ENCODE measurements at regions of chr2 and their contacts with region 1.

Region 1: GRCh38 chr2:219278655-219279516 is at the start of gene DNAJB2:
- DNase-seq: peak; percentile 99
- H3K4me3 ChIP-seq: peak within 1 kb of the TSS; percentile 83
- H3K27ac ChIP-seq: peak within 1 kb of the TSS; percentile 90
- H3K4me1 ChIP-seq: peaks cover 39% of the 10 kb centered on the region
- CTCF ChIP-seq: no peak
- total RNA-seq, gene DNAJB2: 49.9 and 53.0 TPM in 2 replicates

Region 2: GRCh38 chr2:218648088-218648786 is 630.6 kb before region 1 on chr2:
- CTCF ChIA-PET with region 1: no interaction called
- POLR2A ChIA-PET with region 1: no interaction called
- intact Hi-C with region 1: no loop called
- DNase-seq: peak; percentile 67
- H3K4me3 ChIP-seq: no peak overlapping the region
- H3K27ac ChIP-seq: no peak overlapping the region
- H3K4me1 ChIP-seq: no peaks in the 10 kb centered on the region
- CTCF ChIP-seq: peak; percentile 96

Region 3: GRCh38 chr2:218876562-218877219 is 402.2 kb before region 1 on chr2:
- CTCF ChIA-PET with region 1: no interaction called
- POLR2A ChIA-PET with region 1: no interaction called
- intact Hi-C with region 1: loop called (anchors 10 kb)
- DNase-seq: peak; percentile 73
- H3K4me3 ChIP-seq: no peak overlapping the region
- H3K27ac ChIP-seq: peak overlapping the region; percentile 21
- H3K4me1 ChIP-seq: peaks cover 52% of the 10 kb centered on the region
- CTCF ChIP-seq: peak; percentile 99

Region 4: GRCh38 chr2:219177552-219178376 is 101.1 kb before region 1 on chr2 and contains the start of gene RETREG2:
- CTCF ChIA-PET with region 1: no interaction called
- POLR2A ChIA-PET with region 1: interaction called, 3 read pairs
- intact Hi-C with region 1: loop called (anchors 1 kb)
- DNase-seq: peak; percentile 95
- H3K4me3 ChIP-seq: peak within 1 kb of the TSS; percentile 88
- H3K27ac ChIP-seq: peak within 1 kb of the TSS; percentile 92
- H3K4me1 ChIP-seq: peaks cover 18% of the 10 kb centered on the region
- CTCF ChIP-seq: peak; percentile 57
- total RNA-seq, gene RETREG2: 44.9 and 59.1 TPM in 2 replicates

Region 5: DNA sequence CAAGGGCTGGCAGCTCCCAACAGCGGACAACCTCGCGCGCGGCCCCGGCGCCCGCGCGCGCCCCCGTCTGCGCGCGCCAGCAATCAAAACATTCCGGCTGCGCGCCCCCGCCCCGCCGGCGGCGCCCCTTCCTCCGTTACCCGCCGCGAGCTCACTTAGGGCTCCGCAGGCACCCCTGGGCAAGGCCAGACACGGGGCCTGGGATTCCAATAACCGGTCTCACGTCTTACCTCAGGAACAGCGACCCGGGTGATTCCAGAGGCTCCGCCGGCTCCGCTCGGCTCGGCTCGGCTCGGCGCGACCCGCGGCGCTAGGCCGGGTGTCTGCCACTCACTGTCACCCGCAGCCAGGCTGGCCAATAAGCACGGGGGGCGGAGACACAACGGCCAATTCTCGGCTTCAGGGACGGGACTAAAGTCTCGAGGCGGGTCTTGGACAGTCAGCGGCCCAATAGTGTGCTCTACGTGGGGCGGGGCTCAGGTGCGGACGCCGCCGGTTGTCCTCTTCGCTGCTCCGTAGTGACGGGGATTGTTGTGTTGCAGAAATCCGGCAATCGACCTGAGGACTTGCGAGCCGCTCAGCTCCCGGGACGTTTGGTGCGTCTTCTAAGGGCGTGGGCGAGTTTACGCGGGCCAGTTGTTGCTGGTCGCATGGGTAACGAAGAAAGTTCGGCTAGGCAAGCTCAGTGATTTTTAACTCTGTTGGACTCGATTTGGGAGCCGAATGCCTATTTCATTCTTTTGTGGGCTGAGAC is 49.4 kb before region 1 on chr2 and contains the starts of genes ANKZF1 and ATG9A:
- CTCF ChIA-PET with region 1: interaction called, 3 read pairs
- POLR2A ChIA-PET with region 1: no interaction called
- intact Hi-C with region 1: loop called (anchors 1 kb)
- DNase-seq: peak; percentile 99
- H3K4me3 ChIP-seq: peak within 1 kb of the TSS; percentile 87
- H3K27ac ChIP-seq: peak within 1 kb of the TSS; percentile 76
- H3K4me1 ChIP-seq: peaks cover 16% of the 10 kb centered on the region
- CTCF ChIP-seq: no peak
- total RNA-seq, gene ANKZF1: 57.8 and 91.0 TPM in 2 replicates
- total RNA-seq, gene ATG9A: 22.2 and 27.7 TPM in 2 replicates

Region 6: DNA sequence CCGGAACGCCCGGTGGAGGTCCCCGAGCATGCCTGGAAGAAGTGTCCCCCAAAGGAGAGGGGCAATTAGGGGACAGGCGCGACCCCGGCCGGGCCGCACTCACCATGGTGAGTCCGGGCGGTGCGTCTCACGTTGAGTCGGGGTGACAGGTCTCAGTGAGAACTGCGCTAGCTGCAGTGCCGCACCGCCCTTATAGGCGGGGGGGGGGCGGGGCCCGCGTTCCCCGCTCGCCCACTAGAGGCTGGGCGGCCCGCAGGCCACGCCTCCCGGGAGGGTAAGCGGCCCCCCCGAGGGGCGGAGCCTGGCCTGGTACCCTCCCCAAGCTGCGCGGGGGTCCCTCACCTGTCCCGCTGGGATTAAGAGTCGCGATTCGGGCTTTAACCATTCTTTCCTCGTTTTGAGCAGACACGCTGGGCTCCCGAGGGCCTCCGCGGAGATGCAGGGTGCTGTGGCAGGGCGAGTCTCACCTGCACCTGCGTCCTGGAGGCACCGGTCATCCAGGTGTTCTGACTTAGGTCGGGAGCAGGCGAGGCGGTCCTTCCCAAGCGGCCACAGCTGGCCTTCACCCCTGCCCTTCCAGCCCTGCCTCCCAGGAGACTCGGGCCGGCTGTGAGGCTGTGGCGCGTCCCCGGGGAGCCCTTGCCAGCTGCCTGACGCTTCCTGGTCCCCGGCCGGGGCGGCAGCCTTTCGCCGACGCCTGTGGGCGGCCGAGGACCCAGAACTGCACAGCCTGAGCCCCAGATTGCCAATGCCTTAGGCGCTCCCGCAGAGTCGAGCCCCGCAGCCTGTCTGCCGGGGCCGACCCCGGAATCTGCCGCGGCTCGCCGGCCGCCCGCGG is 24.9 kb before region 1 on chr2 and contains the start of gene TUBA4A:
- CTCF ChIA-PET with region 1: interaction called, 10 read pairs
- POLR2A ChIA-PET with region 1: interaction called, 17 read pairs
- intact Hi-C with region 1: loop called (anchors 1 kb)
- DNase-seq: peak; percentile 93
- H3K4me3 ChIP-seq: peak within 1 kb of the TSS; percentile 87
- H3K27ac ChIP-seq: peak within 1 kb of the TSS; percentile 96
- H3K4me1 ChIP-seq: peaks cover 47% of the 10 kb centered on the region
- CTCF ChIP-seq: no peak
- total RNA-seq, gene TUBA4A: 62.8 and 96.0 TPM in 2 replicates

Region 7: DNA sequence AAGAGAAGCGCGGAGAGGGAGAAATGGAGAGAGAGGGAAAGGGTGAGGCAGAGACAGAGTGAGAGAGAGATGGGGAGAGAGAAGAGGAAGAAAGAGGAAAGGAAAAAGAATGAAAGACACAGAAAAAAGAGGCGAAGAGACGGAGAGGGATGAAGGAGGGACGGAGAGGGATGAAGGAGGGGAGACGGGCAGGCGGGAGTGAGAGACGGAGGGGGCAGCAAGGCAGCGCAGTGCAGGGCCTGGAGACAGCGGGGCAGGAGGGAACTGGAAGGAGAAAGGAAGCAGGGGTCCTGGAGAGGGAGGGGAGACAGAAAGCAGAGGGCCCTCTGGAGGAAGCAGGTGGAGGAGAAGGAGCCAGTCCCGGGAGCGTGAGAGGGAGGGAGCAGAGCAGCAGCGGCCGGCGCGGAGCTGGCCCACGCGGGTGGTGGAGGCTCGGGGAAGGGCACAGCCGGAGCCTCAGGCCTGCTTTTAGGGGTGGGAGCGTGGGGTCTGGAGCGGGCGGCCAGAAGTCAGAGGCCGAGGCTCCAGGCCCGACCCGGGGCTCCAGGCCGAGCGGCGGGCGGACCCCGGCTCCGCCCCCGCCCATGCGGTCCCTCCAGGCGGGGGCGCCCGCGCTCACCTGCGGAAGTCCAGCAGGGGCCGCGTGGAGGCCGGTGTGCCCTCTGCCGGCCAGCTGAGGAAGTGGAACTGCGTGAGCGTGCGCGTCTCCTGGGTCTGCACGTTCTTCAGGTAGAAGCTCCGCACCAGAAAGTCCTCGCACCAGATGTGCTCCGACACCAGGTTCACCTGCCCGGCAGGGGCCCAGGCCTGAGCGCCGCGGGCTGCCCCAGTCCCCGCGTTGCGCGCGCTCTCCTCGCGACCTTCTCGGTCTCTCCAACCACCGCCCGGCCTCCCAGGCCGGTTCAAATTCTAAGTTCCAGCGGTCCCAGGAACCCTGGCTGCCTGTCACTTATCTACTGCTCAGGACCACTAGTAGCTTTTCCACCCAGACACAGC is 15.8 kb after region 1 on chr2:
- CTCF ChIA-PET with region 1: interaction called, 13 read pairs
- POLR2A ChIA-PET with region 1: interaction called, 13 read pairs
- intact Hi-C with region 1: loop called (anchors 1 kb)
- DNase-seq: peak; percentile 92
- H3K4me3 ChIP-seq: peak overlapping the region; percentile 64
- H3K27ac ChIP-seq: no peak overlapping the region
- H3K4me1 ChIP-seq: peaks cover 21% of the 10 kb centered on the region
- CTCF ChIP-seq: peak; percentile 97

Measured in OCI-LY7 (cell line).